A549 (cell line): ENCODE measurements at regions of chr10 and their contacts with region 1.

Region 1: GRCh38 chr10:115129752-115130151 is 36.6 kb downstream of the ATRNL1 start:
- DNase-seq: peak in 1 of 2 experiments; percentile 23
- ATAC-seq: peak in 1 of 2 experiments; percentile 66; a peak in 2 of 6 replicates
- H3K4me3 ChIP-seq: no peak overlapping the region
- H3K27ac ChIP-seq: no peak overlapping the region
- H3K4me1 ChIP-seq: no peaks in the 10 kb centered on the region
- CTCF ChIP-seq: peak; percentile 65
- EP300 ChIP-seq: no peak
- POLR2A ChIP-seq: no peak
- RAD21 ChIP-seq: peak; percentile 68 to 86

Region 2: DNA sequence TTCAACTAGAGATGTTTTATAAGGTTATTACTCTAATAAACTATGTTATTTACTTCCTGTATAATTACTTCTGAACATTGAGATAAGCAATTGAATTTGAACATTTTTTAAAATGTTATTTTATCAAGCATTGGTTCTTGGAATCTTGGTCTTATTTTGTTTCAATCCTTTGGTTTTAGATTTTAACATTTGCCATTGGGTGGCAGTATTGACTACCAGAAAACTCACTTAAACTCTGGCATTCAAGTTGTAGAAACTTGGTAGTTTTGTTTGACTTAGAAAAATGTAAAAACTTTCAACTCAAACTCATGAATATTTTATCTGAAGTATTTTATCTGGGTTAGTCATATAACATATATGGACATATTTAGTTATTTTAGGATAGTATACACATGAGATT is 11.5 kb after region 1 on chr10:
- CTCF ChIA-PET with region 1: interaction called, 11 read pairs
- POLR2A ChIA-PET with region 1: no interaction called
- DNase-seq: peak in 1 of 2 experiments; percentile 8
- ATAC-seq: no peak
- H3K4me3 ChIP-seq: no peak overlapping the region
- H3K27ac ChIP-seq: no peak overlapping the region
- H3K4me1 ChIP-seq: no peaks in the 10 kb centered on the region
- CTCF ChIP-seq: peak; percentile 54; the same call in 2 of the 3 replicates
- EP300 ChIP-seq: no peak
- POLR2A ChIP-seq: no peak
- RAD21 ChIP-seq: peak; percentile 43 to 56